ENCODE measurements at regions of chr11 and their contacts with region 1.

Region 1: GRCh38 chr11:118659314-118659952 is 20.0 kb downstream of the TREH start:
- DNase-seq: peak; percentile 75 to 88 (median 84)
- ATAC-seq: peak; percentile 99
- H3K4me3 ChIP-seq: no peak overlapping the region
- H3K4me3 Mint-ChIP-seq: peak overlapping the region in 2 of 10 donors; percentile 56 to 64
- H3K27ac ChIP-seq: no peak overlapping the region
- H3K27ac Mint-ChIP-seq: peak overlapping the region in 1 of 9 donors; percentile 1
- H3K4me1 ChIP-seq: peaks cover 0 to 7% of the 10 kb centered on the region in 2 donors
- H3K4me1 Mint-ChIP-seq: peaks cover 0 to 12% (median 6%) of the 10 kb centered on the region in 7 donors
- H3K27me3 ChIP-seq: no peaks in the 10 kb centered on the region
- H3K27me3 Mint-ChIP-seq: no peaks in the 10 kb centered on the region

Region 2: DNA sequence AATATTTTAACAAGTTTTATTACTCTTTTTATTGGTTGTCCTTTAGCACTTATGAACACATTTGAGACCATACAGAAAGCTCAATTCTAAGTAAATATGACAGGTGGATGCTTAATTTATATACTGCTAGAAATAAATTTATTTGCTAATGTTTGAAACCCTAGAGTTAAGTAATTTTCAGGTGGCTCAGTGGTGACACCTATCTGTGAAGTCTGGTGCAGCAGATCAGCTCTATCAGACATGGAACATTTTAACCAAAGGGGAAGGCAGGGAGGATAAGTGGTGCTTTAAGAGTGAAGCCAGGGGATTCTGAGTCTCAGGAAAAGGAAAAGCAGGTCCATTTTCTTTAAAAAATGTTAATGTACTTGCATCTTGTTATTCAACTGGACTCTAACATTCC is 1038.2 kb before region 1 on chr11:
- CTCF ChIA-PET with region 1: no interaction called
- POLR2A ChIA-PET with region 1: no interaction called
- intact Hi-C with region 1: no loop called
- DNase-seq: no peak
- ATAC-seq: no peak
- H3K4me3 ChIP-seq: no peak overlapping the region
- H3K4me3 Mint-ChIP-seq: no peak overlapping the region
- H3K27ac ChIP-seq: no peak overlapping the region
- H3K27ac Mint-ChIP-seq: no peak overlapping the region
- H3K4me1 ChIP-seq: no peaks in the 10 kb centered on the region
- H3K4me1 Mint-ChIP-seq: no peaks in the 10 kb centered on the region
- H3K27me3 ChIP-seq: no peaks in the 10 kb centered on the region
- H3K27me3 Mint-ChIP-seq: peaks cover 0 to 19% (median 6%) of the 10 kb centered on the region in 5 donors

Region 3: GRCh38 chr11:118592616-118593367 is 66.6 kb before region 1 on chr11:
- CTCF ChIA-PET with region 1: interaction called, 4 read pairs
- POLR2A ChIA-PET with region 1: no interaction called
- intact Hi-C with region 1: loop called (anchors 1 kb)
- DNase-seq: no peak
- ATAC-seq: no peak
- H3K4me3 ChIP-seq: no peak overlapping the region
- H3K4me3 Mint-ChIP-seq: no peak overlapping the region
- H3K27ac ChIP-seq: no peak overlapping the region
- H3K27ac Mint-ChIP-seq: peak overlapping the region in 1 of 9 donors; percentile 25
- H3K4me1 ChIP-seq: peaks cover 0 to 10% of the 10 kb centered on the region in 2 donors
- H3K4me1 Mint-ChIP-seq: peaks cover 5 to 22% (median 16%) of the 10 kb centered on the region in 7 donors
- H3K27me3 ChIP-seq: no peaks in the 10 kb centered on the region
- H3K27me3 Mint-ChIP-seq: no peaks in the 10 kb centered on the region